RWPE1 (cell line): ENCODE measurements at regions of chr12 and their contacts with region 1.

Region 1: DNA sequence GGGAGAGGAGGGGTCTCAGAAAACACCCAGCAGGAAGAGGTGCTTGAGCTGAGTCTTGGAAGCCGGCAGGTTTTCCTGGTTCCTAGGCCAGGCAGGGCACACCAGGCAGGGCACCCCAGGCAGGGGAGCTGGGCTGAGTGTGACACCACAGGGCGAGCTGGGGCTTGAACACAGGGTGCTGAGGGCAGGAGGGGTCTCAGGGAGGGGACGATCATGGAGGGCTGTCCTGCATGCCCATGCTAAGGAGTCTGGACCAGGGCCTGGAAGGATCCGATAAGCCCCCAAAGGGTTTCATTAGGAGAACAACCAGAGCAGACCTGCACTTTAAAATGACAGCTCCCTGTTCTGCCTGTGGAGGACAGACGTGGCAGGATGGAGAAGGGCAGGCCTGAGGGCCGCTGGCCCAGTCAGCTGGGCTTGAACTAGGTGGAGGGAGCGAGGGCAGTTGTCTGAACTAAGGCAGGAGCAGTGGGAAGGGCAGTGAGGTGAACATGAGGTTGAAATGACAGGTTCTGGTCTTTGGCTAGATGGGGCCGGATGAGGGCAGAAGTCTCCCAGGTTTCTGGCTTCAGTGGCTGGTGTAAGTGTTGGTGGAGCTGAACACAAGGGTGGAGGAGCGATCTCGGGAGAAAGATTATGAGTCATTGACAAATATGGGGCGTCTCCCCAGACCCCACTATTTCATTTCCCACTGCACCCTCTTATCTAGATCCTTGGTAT is 171.0 kb upstream of the PZP start:
- DNase-seq: no peak
- H3K27ac ChIP-seq: no peak overlapping the region
- CTCF ChIP-seq: no peak

Region 2: GRCh38 chr12:9687228-9687627 is 308.0 kb after region 1 on chr12:
- CTCF ChIA-PET with region 1: interaction called, 10 read pairs
- POLR2A ChIA-PET with region 1: no interaction called
- DNase-seq: no peak
- H3K27ac ChIP-seq: no peak overlapping the region
- CTCF ChIP-seq: no peak